Ascending aorta (tissue), 2 donors: ENCODE measurements at regions of chr5 and their contacts with region 1.

Region 1: GRCh38 chr5:115625579-115626444 is at the start of gene TMED7:
- DNase-seq: peak; percentile 98 to 100
- H3K4me3 ChIP-seq: peak within 1 kb of the TSS; percentile 79 to 82
- H3K27ac ChIP-seq: peak within 1 kb of the TSS; percentile 95 to 96
- H3K4me1 ChIP-seq: peaks cover 0 to 22% of the 10 kb centered on the region in 2 donors
- H3K27me3 ChIP-seq: no peaks in the 10 kb centered on the region
- CTCF ChIP-seq: no peak
- total RNA-seq, gene TMED7: 52.0 TPM

Region 2: DNA sequence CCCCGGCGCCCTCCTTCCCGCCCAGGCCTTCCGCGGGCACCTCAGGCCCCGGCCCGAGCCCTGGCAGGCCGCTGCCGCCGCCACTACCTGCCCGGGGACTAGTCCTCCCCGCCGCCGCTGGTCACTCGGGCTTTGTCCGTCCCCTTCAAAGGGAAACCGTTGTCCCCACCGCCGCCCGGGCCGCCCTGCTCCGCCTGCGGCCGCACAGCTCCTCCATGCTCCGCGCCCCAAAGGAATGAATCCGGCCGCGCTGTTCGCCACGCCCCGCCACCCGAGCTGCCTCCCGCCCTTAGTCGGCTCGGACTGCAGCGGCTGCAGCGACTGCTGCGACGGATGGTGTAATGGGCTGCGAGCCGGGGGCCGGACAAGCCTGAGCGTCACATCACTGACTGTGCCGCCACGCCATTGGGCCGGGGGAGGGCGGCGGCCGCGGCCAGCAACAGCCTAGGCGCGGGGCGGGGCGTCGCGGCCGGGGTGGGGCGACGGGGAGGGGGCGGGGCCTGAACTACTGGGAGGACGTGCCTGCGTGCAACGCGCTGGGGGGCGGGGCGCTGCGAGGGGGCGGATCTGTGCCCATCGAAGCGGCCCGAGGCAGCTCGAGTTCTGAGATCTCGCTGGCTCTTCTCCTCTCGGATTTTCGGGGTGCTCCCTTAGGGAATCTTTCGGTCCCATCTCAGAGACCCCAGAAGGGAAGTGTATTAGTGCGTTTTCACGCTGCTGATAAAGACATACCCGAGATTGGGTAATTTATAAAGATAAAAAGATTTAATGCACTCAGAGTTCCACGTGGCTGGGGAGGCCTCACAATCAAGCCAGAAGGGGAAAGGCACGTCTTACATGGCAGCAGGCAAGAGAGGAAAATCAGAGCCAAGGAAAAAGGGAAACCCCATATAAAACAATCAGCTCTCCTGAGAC is 81.1 kb before region 1 on chr5 and contains the start of gene FEM1C:
- intact Hi-C with region 1: loop called (anchors 2 kb)
- DNase-seq: peak; percentile 92 to 99
- H3K4me3 ChIP-seq: peak within 1 kb of the TSS; percentile 75 to 90
- H3K27ac ChIP-seq: peak within 1 kb of the TSS; percentile 95 to 99
- H3K4me1 ChIP-seq: peaks cover 3 to 14% of the 10 kb centered on the region in 2 donors
- H3K27me3 ChIP-seq: no peaks in the 10 kb centered on the region
- CTCF ChIP-seq: no peak
- total RNA-seq, gene FEM1C: 11.1 TPM

Region 3: GRCh38 chr5:115594128-115595047 is 31.4 kb before region 1 on chr5:
- intact Hi-C with region 1: no loop called
- DNase-seq: no peak
- H3K4me3 ChIP-seq: no peak overlapping the region
- H3K27ac ChIP-seq: no peak overlapping the region
- H3K4me1 ChIP-seq: no peaks in the 10 kb centered on the region
- H3K27me3 ChIP-seq: no peaks in the 10 kb centered on the region
- CTCF ChIP-seq: no peak

Region 4: DNA sequence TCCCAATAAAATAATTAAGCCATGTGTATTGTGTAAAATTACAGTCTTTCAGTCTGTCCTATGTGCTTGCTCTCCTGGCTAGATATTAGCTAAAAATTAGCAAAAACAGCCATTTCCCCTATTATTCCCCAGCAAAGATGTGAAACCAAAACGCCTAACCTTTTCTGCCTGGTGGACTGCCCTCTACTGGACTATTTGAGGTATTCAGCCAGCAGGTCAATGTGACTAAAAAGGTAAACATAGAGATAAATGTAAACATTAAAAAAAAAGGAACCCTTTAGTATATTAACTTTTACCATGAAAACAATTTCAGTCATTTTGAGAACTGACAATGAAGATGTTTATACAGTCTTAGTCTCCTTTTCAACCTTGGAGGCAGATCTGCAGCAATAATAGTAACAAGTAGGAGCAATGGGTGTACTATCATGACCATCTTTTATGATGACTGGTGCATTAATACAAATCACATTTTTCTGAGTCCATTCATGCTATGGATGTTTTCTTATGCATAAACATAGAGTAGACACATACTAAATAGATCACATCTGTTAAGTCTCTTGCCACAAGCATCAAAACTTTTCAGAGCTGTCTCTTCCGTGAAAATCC is 205.5 kb after region 1 on chr5:
- intact Hi-C with region 1: loop called (anchors 2 kb)
- DNase-seq: no peak
- H3K4me3 ChIP-seq: no peak overlapping the region
- H3K27ac ChIP-seq: no peak overlapping the region
- H3K4me1 ChIP-seq: peaks cover 0 to 3% of the 10 kb centered on the region in 2 donors
- H3K27me3 ChIP-seq: no peaks in the 10 kb centered on the region
- CTCF ChIP-seq: peak; percentile 48 to 79 (median 75)

Region 5: GRCh38 chr5:115977988-115978387 is 352.2 kb after region 1 on chr5:
- intact Hi-C with region 1: loop called (anchors 5 kb)
- DNase-seq: no peak
- H3K4me3 ChIP-seq: no peak overlapping the region
- H3K27ac ChIP-seq: peak overlapping the region; percentile 55 to 74
- H3K4me1 ChIP-seq: peaks cover 4 to 16% of the 10 kb centered on the region in 2 donors
- H3K27me3 ChIP-seq: no peaks in the 10 kb centered on the region
- CTCF ChIP-seq: no peak

Region 6: DNA sequence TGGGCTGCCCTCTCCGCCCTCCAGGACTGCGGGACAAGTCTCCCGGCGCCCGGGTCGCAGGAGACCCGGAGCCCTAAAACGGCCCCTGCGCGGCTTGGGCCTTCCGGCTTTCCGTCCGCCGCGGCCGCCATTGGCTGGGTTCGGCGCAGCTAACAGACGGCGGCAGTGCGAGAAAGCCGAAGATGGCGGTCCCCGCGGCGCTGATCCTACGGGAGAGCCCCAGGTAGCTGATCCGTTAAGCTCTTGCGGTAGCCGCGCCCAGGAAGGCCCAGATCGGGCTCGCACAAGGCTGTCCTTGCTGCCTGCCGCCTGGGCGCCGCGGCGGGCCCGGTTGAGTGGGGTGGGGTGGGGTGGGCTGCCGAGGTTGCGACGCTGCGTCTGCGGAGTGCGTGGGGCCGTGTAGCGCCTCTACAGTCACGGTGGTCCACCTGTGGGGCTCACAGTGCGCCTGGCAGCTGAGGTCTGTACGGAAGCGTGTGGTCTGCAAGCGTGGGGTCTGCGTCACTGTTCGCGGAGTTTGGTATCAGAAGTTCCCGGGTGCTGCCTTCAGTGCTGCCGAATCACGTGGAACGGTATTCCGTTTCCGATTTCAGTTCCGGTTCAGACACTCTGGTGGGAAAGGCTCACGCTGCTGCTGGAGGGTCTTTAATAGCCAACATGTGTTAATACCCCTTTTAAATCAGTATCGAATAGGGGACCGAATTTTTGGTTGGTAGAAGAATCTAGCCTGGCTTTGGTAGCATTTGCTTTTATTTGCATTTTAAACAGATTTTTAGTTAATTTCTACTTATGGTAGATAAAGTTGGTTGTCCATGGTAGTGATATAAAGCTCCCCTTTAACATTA is 459.3 kb after region 1 on chr5 and contains the start of gene COMMD10:
- intact Hi-C with region 1: loop called (anchors 5 kb)
- DNase-seq: peak; percentile 21 to 84
- H3K4me3 ChIP-seq: peak within 1 kb of the TSS; percentile 97 to 98
- H3K27ac ChIP-seq: peak within 1 kb of the TSS; percentile 87 to 91
- H3K4me1 ChIP-seq: peaks cover 0 to 13% of the 10 kb centered on the region in 2 donors
- H3K27me3 ChIP-seq: no peaks in the 10 kb centered on the region
- CTCF ChIP-seq: no peak
- total RNA-seq, gene COMMD10: 25.0 TPM

Region 7: GRCh38 chr5:116696366-116696765 is 1070.6 kb after region 1 on chr5:
- intact Hi-C with region 1: no loop called
- DNase-seq: no peak
- H3K4me3 ChIP-seq: no peak overlapping the region
- H3K27ac ChIP-seq: no peak overlapping the region
- H3K4me1 ChIP-seq: no peaks in the 10 kb centered on the region
- H3K27me3 ChIP-seq: no peaks in the 10 kb centered on the region
- CTCF ChIP-seq: no peak